ENCODE measurements at regions of chr11 and their contacts with region 1.

Region 1: DNA sequence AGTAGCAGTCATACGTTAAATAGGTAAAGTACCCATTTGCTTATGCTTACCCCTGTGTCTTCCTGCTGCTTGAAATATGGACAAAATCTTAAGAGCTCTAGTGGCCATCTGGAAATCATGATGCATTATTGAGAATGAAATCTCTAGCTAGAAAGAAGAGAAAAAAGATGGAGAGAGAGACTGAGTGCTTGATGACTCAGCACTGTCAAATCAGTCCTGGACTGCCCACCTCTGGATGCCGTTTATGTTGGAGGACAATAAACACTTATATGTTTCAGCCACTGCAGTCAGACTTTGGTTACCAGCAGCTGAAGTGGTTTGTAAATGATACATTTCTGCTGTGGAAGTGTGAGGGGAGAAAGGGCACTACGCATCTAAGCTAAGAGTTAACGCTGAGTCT is 3.6 kb downstream of the OR8B4 start:
- DNase-seq: no peak
- H3K4me3 ChIP-seq: no peak overlapping the region
- H3K27ac ChIP-seq: no peak overlapping the region
- H3K4me1 ChIP-seq: no peaks in the 10 kb centered on the region
- H3K27me3 ChIP-seq: no peaks in the 10 kb centered on the region
- CTCF ChIP-seq: no peak
- POLR2A ChIP-seq: no peak

Region 2: GRCh38 chr11:124194698-124195410 is 226.2 kb before region 1 on chr11:
- intact Hi-C with region 1: no loop called
- DNase-seq: no peak
- H3K4me3 ChIP-seq: no peak overlapping the region
- H3K27ac ChIP-seq: peak overlapping the region in 1 of 4 donors; percentile 10
- H3K4me1 ChIP-seq: no peaks in the 10 kb centered on the region
- H3K27me3 ChIP-seq: no peaks in the 10 kb centered on the region
- CTCF ChIP-seq: peak in 5 of 6 experiments; percentile 37 to 69 (median 62)
- POLR2A ChIP-seq: no peak

Region 3: DNA sequence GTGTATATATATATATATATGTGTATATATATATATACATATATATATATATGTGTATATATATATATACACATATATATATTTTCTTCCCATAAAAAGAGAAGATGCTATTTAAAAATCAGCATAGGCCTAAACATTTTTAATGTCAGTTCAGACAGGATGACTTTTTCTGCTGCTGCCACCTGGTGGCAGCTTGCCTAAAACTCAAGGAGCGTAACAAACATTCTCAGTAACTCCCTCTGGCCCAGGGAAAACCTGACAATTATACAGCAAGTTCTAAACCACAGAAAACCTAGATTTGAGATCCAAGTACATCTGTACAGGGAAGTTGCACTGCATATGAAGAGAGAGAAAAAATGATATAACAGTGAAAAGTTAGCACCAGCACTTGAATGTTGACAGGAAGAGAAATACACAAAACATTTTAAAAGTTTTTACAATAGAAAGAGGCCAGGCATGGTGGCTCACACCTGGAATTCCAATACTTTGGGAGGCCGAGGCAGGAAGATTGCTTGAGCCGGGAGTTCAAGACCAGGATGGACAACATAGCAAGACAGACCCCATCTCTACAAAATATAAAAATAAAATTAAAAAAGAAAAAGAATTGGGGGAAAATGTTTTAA is 165.3 kb after region 1 on chr11:
- intact Hi-C with region 1: loop called (anchors 10 kb)
- DNase-seq: no peak
- H3K4me3 ChIP-seq: no peak overlapping the region
- H3K27ac ChIP-seq: no peak overlapping the region
- H3K4me1 ChIP-seq: no peaks in the 10 kb centered on the region
- H3K27me3 ChIP-seq: peaks cover 0 to 6% (median 0%) of the 10 kb centered on the region in 4 donors
- CTCF ChIP-seq: peak in 5 of 6 experiments; percentile 14 to 55 (median 44)
- POLR2A ChIP-seq: no peak

Measured in esophagus squamous epithelium (tissue), 5 donors.